IMR-90 (cell line): ENCODE measurements at regions of chr1 and their contacts with region 1.

Region 1: GRCh38 chr1:20847611-20848080 is 60.5 kb upstream of the HP1BP3 start:
- DNase-seq: peak; percentile 72
- ATAC-seq: peak; percentile 69
- H3K4me3 ChIP-seq: no peak overlapping the region
- H3K27ac ChIP-seq: no peak overlapping the region
- H3K4me1 ChIP-seq: peaks cover 8% of the 10 kb centered on the region
- H3K27me3 ChIP-seq: no peaks in the 10 kb centered on the region
- CTCF ChIP-seq: no peak
- POLR2A ChIP-seq: no peak
- RAD21 ChIP-seq: no peak

Region 2: DNA sequence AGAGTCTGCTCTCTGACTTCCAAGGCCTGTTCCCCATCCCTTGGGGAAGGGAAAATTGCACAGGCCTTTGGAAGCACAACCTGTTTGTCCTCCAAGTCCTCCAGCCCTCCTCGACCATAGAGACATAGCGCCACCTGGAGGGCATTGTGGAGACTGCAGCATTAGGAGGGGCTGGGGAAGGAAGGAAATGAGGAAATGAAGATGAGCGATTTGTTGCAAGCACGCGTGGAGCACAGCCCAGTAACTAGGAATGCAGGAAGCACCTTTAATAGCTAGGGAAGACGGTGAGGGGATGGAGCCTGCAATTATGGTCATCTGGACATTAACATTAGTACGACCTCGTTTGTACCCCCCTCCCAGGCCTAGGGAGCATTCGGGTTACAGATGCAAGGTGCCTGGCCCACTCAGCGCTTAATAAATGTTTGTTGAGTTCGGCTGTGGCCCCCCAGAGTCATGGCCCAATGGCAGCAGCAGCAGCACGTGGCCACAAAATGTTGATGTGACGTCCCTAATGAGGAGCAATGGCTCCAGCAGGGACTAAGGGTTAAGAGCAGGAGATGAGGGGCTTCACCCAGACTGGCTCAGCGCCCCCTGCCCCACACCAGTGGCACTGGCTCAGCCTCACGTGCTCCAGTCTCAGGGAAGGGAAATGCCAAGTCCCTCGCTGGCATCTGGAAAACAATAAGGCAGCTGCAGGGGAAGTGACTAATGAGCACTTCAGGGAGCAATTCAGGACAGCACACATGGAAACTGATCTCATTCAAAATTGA is 353.6 kb before region 1 on chr1:
- CTCF ChIA-PET with region 1: no interaction called
- POLR2A ChIA-PET with region 1: no interaction called
- dilution Hi-C with region 1: no loop called
- in situ Hi-C with region 1: no loop called
- intact Hi-C with region 1: no loop called
- DNase-seq: peak; percentile 88
- ATAC-seq: peak; percentile 68
- H3K4me3 ChIP-seq: no peak overlapping the region
- H3K27ac ChIP-seq: peak overlapping the region; percentile 38
- H3K4me1 ChIP-seq: peaks cover 19% of the 10 kb centered on the region
- H3K27me3 ChIP-seq: no peaks in the 10 kb centered on the region
- CTCF ChIP-seq: peak; percentile 99
- POLR2A ChIP-seq: peak; percentile 59; the same call in 1 of the 2 replicates
- RAD21 ChIP-seq: peak; percentile 99

Region 3: DNA sequence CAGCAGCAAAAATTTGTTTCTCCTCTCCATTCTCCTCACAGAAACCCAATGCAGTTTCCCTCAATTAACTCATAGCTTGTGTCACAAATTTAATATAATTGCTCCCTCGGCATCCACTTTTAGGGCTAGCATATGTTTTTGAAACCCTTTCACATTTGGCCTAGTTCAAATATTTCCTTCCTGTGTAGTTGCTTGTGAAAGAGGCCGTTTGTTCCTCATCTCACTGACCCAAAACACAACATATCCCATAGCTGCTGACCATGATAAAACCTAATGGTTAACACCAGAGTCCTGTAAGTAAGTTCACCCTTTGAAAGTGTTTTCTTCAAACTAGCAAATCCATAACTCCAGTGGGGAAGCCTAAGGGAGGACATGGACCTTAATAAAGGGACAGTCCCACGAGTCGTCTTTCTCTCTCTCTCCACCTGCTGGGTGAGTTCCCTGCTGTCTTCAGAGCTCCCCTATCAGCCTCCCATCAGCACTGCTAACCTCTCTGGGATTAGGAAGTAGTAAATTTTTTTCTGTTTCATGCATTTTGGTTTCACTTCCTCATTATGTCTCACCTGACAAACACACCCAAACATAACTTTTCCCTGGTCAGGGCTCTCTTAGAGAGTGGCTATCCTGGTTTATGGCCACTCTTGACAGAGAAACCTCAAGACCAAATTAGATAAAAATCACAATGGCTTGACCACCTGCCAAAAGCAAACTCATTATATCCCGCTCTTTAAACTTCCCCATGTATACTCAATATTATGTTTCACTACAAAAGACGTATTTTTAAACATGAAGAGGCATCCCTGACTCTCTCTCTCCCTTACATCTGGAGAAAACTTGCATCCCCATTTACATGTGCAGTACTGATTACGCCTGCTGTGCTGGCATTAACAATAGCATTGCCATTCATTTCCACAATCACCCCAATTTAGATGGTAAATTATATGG is 117.2 kb after region 1 on chr1:
- CTCF ChIA-PET with region 1: interaction called, 3 read pairs
- POLR2A ChIA-PET with region 1: no interaction called
- dilution Hi-C with region 1: no loop called
- in situ Hi-C with region 1: no loop called
- intact Hi-C with region 1: loop called (anchors 5 kb)
- DNase-seq: no peak
- ATAC-seq: no peak
- H3K4me3 ChIP-seq: no peak overlapping the region
- H3K27ac ChIP-seq: no peak overlapping the region
- H3K4me1 ChIP-seq: no peaks in the 10 kb centered on the region
- H3K27me3 ChIP-seq: no peaks in the 10 kb centered on the region
- CTCF ChIP-seq: no peak
- POLR2A ChIP-seq: no peak
- RAD21 ChIP-seq: no peak

Region 4: DNA sequence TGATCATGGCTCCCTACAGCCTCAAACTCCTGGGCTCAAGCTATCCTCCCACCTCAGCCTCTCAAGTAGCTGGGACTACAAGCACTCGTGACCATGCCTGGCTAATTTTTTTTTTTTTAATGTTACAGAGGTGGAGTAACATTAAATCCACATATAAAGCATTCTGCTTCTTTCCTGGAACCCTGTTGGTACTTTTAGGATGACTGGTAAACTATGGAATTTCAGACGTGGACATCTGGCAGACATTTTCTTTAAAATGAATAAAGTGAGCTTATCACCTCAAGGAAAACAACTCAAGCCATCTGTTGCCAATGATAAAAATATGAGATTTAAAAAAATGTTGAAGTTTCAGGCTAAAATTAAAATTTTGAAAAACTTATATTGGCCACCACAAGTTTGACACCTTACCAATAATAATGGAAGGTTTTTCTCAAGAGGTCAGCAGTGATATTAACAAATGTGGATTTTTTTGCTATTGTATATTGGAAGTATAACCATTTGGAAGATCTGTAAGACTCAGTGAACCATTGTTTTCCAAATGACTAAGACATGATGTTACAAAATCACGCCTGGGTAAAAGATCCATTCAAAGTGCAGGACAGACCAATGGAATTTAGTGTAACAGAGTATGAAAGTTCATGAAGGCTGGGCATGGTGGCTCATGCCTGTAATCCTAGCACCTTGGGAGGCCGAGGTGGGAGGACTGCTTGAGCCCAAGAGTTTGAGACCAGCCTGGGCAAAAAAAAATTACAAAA is 381.8 kb after region 1 on chr1:
- CTCF ChIA-PET with region 1: no interaction called
- POLR2A ChIA-PET with region 1: no interaction called
- dilution Hi-C with region 1: no loop called
- in situ Hi-C with region 1: no loop called
- intact Hi-C with region 1: no loop called
- DNase-seq: peak; percentile 80
- ATAC-seq: peak; percentile 31
- H3K4me3 ChIP-seq: no peak overlapping the region
- H3K27ac ChIP-seq: no peak overlapping the region
- H3K4me1 ChIP-seq: peaks cover 2% of the 10 kb centered on the region; the same call in 1 of the 2 replicates
- H3K27me3 ChIP-seq: no peaks in the 10 kb centered on the region
- CTCF ChIP-seq: no peak
- POLR2A ChIP-seq: no peak
- RAD21 ChIP-seq: no peak